OCI-LY7 (cell line): ENCODE measurements at regions of chr20 and their contacts with region 1.

Region 1: DNA sequence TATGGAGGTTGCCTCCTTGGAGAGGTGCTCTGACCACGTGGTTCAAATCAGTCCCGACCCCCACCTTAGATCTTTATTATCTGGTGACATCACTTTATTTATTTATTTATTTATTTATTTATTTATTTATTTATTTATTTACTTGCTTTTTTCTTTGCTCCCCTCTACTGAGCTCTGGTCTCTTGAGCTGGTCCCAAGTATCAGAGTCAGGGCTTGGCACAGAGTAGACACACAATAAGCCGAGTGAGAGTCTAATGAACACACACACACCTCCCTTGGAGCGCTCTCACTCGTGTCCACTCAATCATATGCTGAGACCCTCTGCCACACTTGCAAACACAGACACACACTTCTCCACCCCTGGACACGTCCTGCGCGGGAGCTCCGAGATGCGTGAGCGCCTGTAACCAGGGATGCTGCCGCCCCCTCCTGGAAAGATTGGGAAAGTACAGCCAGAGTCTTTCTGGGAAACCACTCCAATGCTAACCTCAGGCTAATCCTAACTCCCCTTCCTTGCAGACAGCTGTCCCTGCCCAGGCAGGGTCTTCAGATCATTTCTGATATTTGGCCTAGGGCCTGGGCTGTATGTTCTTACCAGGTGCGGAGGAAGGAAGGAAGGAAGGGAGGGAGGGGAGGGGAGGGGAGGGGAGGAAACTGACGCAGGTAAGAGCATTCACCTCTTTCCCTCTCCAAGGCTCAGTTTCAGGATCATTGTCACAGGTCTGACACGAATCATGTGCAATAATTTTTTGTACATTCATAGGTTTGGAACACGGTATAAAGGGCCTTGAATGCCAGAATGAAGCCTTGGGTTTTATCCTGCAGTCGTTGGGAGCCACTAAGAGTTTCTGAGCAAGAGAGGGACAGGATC is 70.9 kb downstream of the STK35 start:
- DNase-seq: peak; percentile 63
- H3K4me3 ChIP-seq: no peak overlapping the region
- H3K27ac ChIP-seq: no peak overlapping the region
- H3K4me1 ChIP-seq: no peaks in the 10 kb centered on the region
- CTCF ChIP-seq: peak; percentile 88

Region 2: DNA sequence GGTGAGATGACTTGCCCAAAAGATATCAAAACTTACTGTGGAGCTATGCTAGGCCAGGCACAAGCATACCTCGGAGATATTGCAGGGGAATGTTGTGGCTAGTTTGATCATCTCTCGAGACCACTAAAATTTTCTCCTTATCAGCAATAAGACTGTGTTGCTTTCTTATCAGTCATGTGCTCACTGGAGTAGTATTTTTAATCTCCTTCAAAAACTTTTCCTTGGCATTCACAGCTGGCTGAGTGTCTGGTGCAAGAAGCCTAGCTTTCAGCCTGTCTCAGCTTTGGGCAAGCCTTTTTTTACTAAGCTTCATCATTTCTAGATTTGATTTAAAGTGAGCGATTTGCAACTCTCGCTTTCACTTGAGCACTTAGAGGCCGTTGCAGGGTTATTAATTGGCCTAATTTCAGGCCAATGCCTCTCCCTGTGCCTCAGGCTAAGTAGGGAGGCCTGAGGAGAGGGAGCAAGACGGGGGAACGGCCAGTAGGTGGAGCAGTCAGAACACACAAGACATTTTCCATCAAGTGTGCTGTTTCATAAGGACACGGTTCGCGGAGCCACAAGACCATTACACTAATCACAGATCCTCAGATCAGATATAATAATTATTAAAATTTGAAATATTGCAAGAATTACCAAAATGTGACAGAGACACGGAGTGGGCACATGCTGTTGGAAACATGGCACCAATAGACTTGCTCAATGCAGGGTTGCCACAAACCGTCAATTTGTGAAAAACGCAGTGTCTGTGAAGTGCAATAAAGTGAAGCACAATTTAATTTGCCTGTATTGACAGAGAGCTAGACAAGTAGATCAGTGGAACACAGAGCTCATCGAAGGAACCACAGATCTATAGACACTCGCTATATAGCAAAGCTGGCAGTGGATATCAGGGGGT is 408.2 kb before region 1 on chr20:
- CTCF ChIA-PET with region 1: no interaction called
- POLR2A ChIA-PET with region 1: no interaction called
- intact Hi-C with region 1: loop called (anchors 1 kb)
- DNase-seq: peak; percentile 67
- H3K4me3 ChIP-seq: no peak overlapping the region
- H3K27ac ChIP-seq: no peak overlapping the region
- H3K4me1 ChIP-seq: no peaks in the 10 kb centered on the region
- CTCF ChIP-seq: peak; percentile 89

Region 3: DNA sequence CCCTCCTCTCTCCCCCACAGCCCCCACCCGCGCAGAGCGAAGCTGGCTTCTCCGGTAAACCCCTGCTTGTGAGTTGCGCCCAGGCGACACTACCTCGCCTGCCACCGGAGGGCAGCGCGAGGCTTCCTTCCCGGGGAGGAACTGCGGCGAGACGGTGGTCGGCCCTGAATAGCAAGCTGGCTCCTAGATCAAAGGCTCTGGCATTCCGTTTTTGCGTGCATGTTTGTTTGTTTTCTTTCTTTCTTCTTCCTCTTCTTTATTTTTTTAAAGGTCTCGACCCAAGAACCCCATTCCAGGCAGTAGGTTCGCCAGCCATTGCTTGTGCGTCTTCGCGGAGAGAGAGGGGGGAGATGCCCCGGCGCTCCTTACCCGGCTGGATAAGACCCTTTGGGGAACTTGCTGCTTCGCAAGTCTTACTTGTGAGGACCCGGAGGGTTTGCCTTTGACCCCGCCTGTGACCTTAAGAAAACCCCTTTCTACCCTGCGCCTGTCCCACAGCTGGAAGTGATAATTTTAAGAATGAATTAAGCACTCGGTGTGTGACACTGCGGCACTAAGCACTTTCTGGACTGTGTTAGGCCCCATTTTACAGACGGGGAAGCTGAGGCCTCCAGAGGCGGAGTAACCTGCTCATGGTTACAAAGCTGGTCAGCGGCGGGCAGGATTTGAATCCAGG is 370.0 kb before region 1 on chr20:
- CTCF ChIA-PET with region 1: no interaction called
- POLR2A ChIA-PET with region 1: no interaction called
- intact Hi-C with region 1: loop called (anchors 5 kb)
- DNase-seq: peak; percentile 52
- H3K4me3 ChIP-seq: no peak overlapping the region
- H3K27ac ChIP-seq: no peak overlapping the region
- H3K4me1 ChIP-seq: no peaks in the 10 kb centered on the region
- CTCF ChIP-seq: peak; percentile 85

Region 4: GRCh38 chr20:1965520-1966351 is 206.8 kb before region 1 on chr20:
- CTCF ChIA-PET with region 1: no interaction called
- POLR2A ChIA-PET with region 1: no interaction called
- intact Hi-C with region 1: loop called (anchors 1 kb)
- DNase-seq: peak; percentile 86
- H3K4me3 ChIP-seq: no peak overlapping the region
- H3K27ac ChIP-seq: no peak overlapping the region
- H3K4me1 ChIP-seq: peaks cover 8% of the 10 kb centered on the region
- CTCF ChIP-seq: peak; percentile 98

Region 5: DNA sequence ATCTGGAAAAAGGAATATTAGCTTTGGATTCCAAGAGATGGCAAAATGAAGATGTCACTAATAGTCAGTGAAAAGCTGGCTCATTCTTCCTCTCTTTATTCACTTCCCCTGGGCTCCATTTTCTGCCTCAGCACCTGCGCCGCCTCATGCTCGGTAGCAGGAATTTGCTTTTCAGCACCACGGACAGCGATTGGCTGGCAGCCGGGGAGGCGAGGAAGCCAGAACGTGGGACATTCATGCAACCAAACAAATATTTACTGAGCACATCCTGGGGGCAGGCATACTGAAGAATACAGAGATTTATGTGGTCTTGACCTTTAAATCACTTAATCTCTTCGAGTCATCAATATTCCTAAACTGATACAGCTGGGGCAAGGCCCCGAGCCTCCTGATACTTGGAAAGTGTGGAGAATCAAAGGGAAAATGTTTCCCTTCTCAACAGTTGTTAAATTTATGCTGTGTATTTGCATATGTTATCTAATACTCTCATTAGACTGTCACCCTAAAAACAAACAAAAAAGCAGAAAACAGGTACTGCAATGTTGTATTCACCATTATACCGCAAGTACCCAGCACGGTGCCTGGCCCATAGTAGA is 166.6 kb before region 1 on chr20:
- CTCF ChIA-PET with region 1: interaction called, 3 read pairs
- POLR2A ChIA-PET with region 1: no interaction called
- intact Hi-C with region 1: loop called (anchors 1 kb)
- DNase-seq: peak; percentile 56
- H3K4me3 ChIP-seq: no peak overlapping the region
- H3K27ac ChIP-seq: no peak overlapping the region
- H3K4me1 ChIP-seq: no peaks in the 10 kb centered on the region
- CTCF ChIP-seq: no peak

Region 6: GRCh38 chr20:2101865-2102584 is 70.5 kb before region 1 on chr20:
- CTCF ChIA-PET with region 1: no interaction called
- POLR2A ChIA-PET with region 1: no interaction called
- intact Hi-C with region 1: loop called (anchors 5 kb)
- DNase-seq: peak; percentile 95
- H3K4me3 ChIP-seq: peak overlapping the region; percentile 93
- H3K27ac ChIP-seq: peak overlapping the region; percentile 85
- H3K4me1 ChIP-seq: peaks cover 26% of the 10 kb centered on the region
- CTCF ChIP-seq: no peak

Region 7: GRCh38 chr20:2230716-2231488 is 58.4 kb after region 1 on chr20:
- CTCF ChIA-PET with region 1: no interaction called
- POLR2A ChIA-PET with region 1: no interaction called
- intact Hi-C with region 1: no loop called
- DNase-seq: no peak
- H3K4me3 ChIP-seq: no peak overlapping the region
- H3K27ac ChIP-seq: no peak overlapping the region
- H3K4me1 ChIP-seq: no peaks in the 10 kb centered on the region
- CTCF ChIP-seq: no peak